ENCODE measurements at regions of chr3 and their contacts with region 1.

Region 1: DNA sequence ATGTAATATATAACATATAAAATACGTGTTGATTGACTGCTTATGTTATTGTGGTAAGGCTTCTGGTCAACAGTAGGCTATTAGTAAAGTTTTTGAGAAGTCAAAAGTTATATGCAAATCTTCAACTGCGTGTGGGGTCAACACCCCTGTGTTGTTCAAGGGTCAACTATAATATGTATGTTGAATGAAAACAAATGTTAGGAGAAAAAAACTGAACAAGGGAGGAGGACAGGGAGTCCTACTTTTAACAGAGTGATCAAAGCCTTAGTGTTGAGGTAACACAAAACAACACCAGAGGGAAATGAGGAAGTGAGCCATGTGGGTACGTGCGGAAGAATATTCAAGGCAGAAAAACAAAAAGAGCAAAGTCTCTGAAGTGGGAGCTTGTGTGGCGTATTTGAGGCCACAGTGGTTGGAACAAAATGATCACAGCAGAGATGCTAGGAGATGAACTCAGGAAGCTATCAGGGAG is 62.5 kb downstream of the SFMBT1 start:
- DNase-seq: peak; percentile 54
- H3K4me3 Mint-ChIP-seq: peak overlapping the region; percentile 30
- H3K27ac Mint-ChIP-seq: peak overlapping the region; percentile 86
- H3K4me1 Mint-ChIP-seq: peaks cover 27% of the 10 kb centered on the region
- H3K27me3 Mint-ChIP-seq: no peaks in the 10 kb centered on the region

Region 2: DNA sequence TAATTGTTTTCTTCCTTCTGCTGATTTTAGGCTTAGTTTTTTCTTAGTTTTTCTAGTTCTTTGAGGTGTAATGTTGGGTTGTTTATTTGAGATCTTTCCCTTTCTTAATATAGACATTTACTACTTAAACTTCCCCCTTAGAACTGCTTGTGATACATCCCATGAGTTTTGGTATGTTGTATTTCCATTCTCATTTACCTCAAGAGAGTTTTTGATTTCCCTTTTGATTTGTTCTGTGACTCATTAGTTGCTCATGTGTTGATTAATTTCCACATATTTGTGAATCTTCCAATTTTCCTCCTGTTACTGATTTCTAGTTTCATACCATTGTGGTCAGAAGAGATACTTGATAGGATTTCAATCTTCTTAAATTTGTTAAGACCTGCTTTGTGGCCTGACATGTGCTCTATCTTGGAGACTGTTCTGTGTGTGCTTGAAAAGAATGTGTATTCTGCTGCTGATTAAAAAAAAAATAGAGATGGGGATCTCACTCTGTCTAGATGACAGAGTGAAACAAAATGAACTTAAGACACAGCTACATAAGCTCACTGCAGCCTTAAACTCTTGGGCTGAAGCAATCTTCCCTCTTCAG is 1254.2 kb before region 1 on chr3:
- intact Hi-C with region 1: loop called (anchors 5 kb)
- DNase-seq: no peak
- H3K4me3 Mint-ChIP-seq: no peak overlapping the region
- H3K27ac Mint-ChIP-seq: peak overlapping the region; percentile 74
- H3K4me1 Mint-ChIP-seq: peaks cover 34% of the 10 kb centered on the region
- H3K27me3 Mint-ChIP-seq: peaks cover 5% of the 10 kb centered on the region

Region 3: DNA sequence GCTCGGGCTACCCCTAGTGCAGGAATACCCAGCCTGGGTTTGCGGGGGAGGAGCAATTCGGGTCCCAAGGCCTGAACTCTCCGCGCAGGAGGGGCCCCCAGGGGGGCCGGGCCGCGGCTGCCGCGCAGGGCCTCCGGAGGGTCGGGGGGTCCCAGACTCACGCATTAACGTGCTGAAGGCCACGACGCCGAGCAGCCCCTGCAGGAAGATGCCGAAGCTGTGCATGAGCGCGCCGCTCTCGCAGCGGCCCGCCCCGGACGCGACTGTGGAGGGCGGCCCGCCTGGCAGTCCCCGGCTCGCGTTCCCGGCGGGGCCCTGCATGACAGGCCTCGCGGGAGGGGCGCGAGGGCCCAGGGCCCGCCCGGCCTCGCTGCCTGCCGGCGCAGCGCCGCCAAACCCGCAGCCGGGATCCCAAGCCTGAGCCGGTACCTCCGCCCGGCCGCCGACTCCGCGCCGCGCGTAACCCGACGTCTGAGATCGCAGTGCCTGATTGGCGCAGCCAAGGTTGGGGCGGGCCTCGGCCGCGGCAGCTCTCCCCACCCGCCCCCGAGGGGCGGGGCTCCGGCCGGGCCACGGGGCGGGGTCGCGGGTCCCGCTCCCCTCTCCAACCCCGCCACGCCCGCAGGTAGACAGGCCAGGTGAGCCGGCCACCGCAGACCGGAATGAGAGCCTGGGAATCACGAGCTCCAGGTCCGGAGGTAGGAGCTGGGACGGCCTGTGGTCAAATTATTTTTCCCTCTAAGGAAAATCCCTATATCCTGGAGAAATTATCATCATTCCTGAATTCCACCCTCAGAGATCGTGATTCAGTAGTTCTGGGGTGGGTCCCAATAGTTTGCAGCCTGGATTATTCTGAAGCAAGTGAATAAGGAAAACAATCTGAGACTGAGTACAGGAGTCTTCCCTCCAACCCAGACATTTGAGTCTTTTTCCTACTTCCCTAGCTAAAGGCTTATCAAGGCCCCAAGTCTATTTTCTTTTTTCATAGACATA is 85.9 kb before region 1 on chr3 and contains the start of gene STIMATE:
- intact Hi-C with region 1: loop called (anchors 2 kb)
- DNase-seq: peak; percentile 85
- H3K4me3 Mint-ChIP-seq: peak within 1 kb of the TSS; percentile 99
- H3K27ac Mint-ChIP-seq: peak within 1 kb of the TSS; percentile 72
- H3K4me1 Mint-ChIP-seq: peaks cover 40% of the 10 kb centered on the region
- H3K27me3 Mint-ChIP-seq: no peaks in the 10 kb centered on the region
- total RNA-seq, gene STIMATE: 17.4 and 17.6 TPM in 2 replicates

Region 4: GRCh38 chr3:52934630-52935530 is 48.5 kb before region 1 on chr3:
- intact Hi-C with region 1: loop called (anchors 2 kb)
- DNase-seq: peak; percentile 23
- H3K4me3 Mint-ChIP-seq: no peak overlapping the region
- H3K27ac Mint-ChIP-seq: peak overlapping the region; percentile 28
- H3K4me1 Mint-ChIP-seq: peaks cover 12% of the 10 kb centered on the region
- H3K27me3 Mint-ChIP-seq: no peaks in the 10 kb centered on the region

Region 5: DNA sequence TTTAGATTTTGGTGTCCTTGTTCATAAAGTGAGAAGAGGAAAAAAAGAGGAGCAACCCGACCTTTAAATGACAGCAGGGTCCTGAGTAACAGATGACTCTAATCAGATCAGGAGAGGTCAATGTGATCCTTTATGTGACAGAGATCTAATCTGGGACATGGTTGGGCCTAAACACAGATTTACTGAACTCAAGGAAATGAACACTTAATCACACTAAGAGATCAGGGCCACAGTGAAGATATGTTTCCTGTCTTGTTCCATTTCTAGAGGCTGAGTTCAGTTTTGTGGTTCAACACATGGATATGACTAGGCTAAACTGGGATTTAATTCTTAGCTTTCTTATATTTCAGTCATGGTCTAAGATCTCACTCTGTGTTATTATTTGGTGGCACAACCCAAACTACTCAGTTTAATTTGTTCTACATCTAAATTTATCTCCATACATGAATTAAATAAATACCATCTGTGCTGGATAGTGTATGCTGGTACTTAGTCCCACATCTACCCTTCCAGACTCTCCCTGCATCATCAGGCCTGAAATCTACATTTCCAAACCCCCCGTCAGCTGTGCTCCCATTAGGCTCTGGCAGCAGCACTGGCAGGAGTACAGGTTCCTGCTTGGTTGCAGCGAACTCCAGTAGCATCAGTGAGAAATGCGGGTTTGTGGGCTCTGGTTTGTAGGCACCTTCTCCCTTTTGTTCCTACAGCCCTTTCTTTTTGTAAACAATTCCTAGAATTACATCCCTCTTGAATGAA is 39.9 kb after region 1 on chr3:
- intact Hi-C with region 1: loop called (anchors 1 kb)
- DNase-seq: no peak
- H3K4me3 Mint-ChIP-seq: no peak overlapping the region
- H3K27ac Mint-ChIP-seq: no peak overlapping the region
- H3K4me1 Mint-ChIP-seq: peaks cover 38% of the 10 kb centered on the region
- H3K27me3 Mint-ChIP-seq: no peaks in the 10 kb centered on the region

Region 6: GRCh38 chr3:53045518-53046170 is 62.3 kb after region 1 on chr3 and contains the start of gene SFMBT1:
- intact Hi-C with region 1: loop called (anchors 1 kb)
- DNase-seq: no peak
- H3K4me3 Mint-ChIP-seq: peak within 1 kb of the TSS; percentile 91
- H3K27ac Mint-ChIP-seq: peak within 1 kb of the TSS; percentile 91
- H3K4me1 Mint-ChIP-seq: peaks cover 35% of the 10 kb centered on the region
- H3K27me3 Mint-ChIP-seq: peaks cover 13% of the 10 kb centered on the region
- total RNA-seq, gene SFMBT1: 23.4 and 24.3 TPM in 2 replicates

Region 7: GRCh38 chr3:53102601-53103147 is 119.3 kb after region 1 on chr3:
- intact Hi-C with region 1: loop called (anchors 2 kb)
- DNase-seq: peak; percentile 59
- H3K4me3 Mint-ChIP-seq: peak overlapping the region; percentile 71
- H3K27ac Mint-ChIP-seq: peak overlapping the region; percentile 88
- H3K4me1 Mint-ChIP-seq: peaks cover 54% of the 10 kb centered on the region
- H3K27me3 Mint-ChIP-seq: no peaks in the 10 kb centered on the region